CD14-positive monocyte (primary cell): ENCODE measurements at regions of chr17 and their contacts with region 1.

Region 1: DNA sequence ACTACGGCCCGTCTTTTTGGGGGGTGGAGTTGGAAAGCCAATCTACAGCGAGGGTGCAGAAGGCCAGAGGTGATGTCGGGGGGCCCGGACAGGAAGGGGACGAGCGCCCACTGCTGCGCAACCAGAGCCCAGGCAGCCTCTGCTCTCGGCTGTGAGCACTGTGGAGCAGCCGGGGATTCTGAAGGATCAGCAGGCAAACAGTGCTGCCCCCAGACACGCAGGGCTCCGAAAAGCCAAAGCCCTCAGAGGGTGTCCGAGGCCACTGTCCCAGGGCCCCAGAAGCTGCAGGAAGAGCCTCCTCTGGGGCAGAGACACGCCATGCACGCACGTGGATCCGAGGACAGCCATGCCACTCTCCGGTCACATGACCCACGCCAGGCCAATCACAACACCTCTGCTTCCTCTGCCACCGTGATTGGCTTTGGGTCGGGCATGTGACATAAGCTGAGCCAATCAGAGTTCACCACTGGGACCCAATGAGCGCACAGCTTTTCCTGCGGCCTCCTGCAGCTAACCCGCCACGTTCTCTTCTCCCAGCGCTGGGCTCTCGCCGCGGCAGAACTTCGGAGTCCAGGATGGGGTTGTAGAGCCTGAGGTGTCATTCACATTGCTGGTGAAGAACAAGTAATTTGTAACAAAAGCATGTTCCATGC is 40.7 kb downstream of the ACTG1 start:
- DNase-seq: peak; percentile 19 to 42 (median 24)
- H3K4me3 ChIP-seq: no peak overlapping the region
- H3K4me3 Mint-ChIP-seq: no peak overlapping the region
- H3K27ac ChIP-seq: no peak overlapping the region
- H3K27ac Mint-ChIP-seq: no peak overlapping the region
- H3K4me1 ChIP-seq: peaks cover 4 to 5% of the 10 kb centered on the region in 2 donors
- H3K4me1 Mint-ChIP-seq: peaks cover 3% of the 10 kb centered on the region
- H3K27me3 ChIP-seq: no peaks in the 10 kb centered on the region
- H3K27me3 Mint-ChIP-seq: peaks cover 5 to 9% (median 5%) of the 10 kb centered on the region in 3 donors
- CTCF ChIP-seq: no peak

Region 2: DNA sequence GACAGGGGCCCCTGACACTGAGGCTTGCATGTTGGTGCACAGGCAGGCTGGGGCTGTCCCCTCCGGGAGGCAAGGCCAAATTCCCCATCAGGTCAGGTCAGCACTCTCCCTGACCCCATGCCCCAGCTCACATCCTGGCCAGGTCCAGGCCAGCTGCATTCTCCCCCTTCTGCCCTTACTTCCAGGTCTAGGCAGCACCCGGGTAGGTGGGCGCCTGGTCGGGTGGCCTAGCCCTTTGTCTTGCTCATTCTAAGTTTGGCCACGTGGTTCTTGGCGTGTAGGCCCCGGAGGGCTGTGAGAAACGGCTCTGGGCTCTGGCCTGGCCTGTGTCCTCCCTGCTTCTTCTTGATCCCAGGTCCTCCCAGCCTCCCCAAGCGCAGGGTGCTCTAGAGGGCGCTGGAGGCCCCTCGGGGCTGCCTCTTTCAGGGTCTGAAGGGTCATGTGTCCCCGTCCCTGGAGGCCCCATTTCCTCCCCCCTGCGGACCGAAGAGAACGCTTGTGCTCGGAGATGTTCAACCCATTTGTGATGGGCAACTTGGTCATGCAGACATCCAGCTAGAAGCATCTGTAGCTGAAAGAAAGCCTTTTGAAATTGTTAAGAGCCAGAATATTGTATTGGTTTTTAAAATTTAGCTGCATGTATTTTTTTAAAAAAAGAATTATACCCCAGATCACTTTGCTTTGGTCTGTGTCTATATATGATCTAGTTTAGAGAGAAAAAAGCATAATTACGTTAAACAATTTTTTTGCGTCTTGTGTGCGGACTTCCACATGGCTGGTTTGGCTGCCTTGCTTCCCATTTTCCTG is 70.0 kb before region 1 on chr17:
- intact Hi-C with region 1: loop called in 1 of 2 experiments (anchors 5 kb)
- DNase-seq: peak in 2 of 3 donors; percentile 47 to 64
- H3K4me3 ChIP-seq: peak overlapping the region in 1 of 3 experiments; percentile 93
- H3K4me3 Mint-ChIP-seq: peak overlapping the region; percentile 41 to 42
- H3K27ac ChIP-seq: no peak overlapping the region
- H3K27ac Mint-ChIP-seq: peak overlapping the region in 4 of 7 donors; percentile 24 to 86 (median 56)
- H3K4me1 ChIP-seq: peaks cover 42 to 56% of the 10 kb centered on the region in 2 donors
- H3K4me1 Mint-ChIP-seq: peaks cover 46% of the 10 kb centered on the region
- H3K27me3 ChIP-seq: no peaks in the 10 kb centered on the region
- H3K27me3 Mint-ChIP-seq: peaks cover 0 to 9% (median 2%) of the 10 kb centered on the region in 3 donors
- CTCF ChIP-seq: no peak

Region 3: DNA sequence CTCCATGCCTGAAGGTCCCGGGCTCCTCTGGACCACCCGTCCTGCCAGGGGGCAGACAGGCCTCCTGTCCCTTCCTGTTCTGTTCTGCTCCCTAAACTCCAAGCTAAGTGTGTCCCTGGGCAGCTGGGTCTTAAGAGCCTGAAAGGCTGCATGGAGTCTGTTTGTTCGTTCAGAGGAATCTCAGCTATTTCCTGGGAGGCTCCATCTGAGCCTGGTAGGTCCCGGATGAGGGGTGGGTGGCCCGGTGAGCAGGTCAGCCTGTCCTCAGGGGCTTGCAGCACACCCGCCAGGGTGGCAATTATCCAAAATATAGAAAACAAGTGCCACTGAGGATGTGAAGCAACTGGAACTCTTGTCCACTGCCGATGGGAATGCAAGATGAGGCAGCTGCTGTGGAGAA is 28.1 kb after region 1 on chr17:
- intact Hi-C with region 1: no loop called
- DNase-seq: no peak
- H3K4me3 ChIP-seq: no peak overlapping the region
- H3K4me3 Mint-ChIP-seq: no peak overlapping the region
- H3K27ac ChIP-seq: no peak overlapping the region
- H3K27ac Mint-ChIP-seq: no peak overlapping the region
- H3K4me1 ChIP-seq: no peaks in the 10 kb centered on the region
- H3K4me1 Mint-ChIP-seq: peaks cover 1% of the 10 kb centered on the region
- H3K27me3 ChIP-seq: peaks cover 0 to 6% of the 10 kb centered on the region in 2 donors
- H3K27me3 Mint-ChIP-seq: peaks cover 26 to 60% (median 33%) of the 10 kb centered on the region in 3 donors
- CTCF ChIP-seq: no peak